ENCODE measurements at regions of chr11 and their contacts with region 1.

Region 1: GRCh38 chr11:8019314-8020243 is 32.4 kb downstream of the EIF3F start:
- DNase-seq: no peak
- H3K4me3 ChIP-seq: peak overlapping the region; percentile 45 to 46
- H3K27ac ChIP-seq: peak overlapping the region; percentile 76 to 77
- H3K4me1 ChIP-seq: no peaks in the 10 kb centered on the region
- H3K27me3 ChIP-seq: no peaks in the 10 kb centered on the region
- CTCF ChIP-seq: no peak
- POLR2A ChIP-seq: no peak

Region 2: GRCh38 chr11:8056810-8057463 is 37.4 kb after region 1 on chr11:
- intact Hi-C with region 1: no loop called
- DNase-seq: no peak
- H3K4me3 ChIP-seq: no peak overlapping the region
- H3K27ac ChIP-seq: no peak overlapping the region
- H3K4me1 ChIP-seq: no peaks in the 10 kb centered on the region
- H3K27me3 ChIP-seq: no peaks in the 10 kb centered on the region
- CTCF ChIP-seq: no peak
- POLR2A ChIP-seq: no peak

Region 3: GRCh38 chr11:8087185-8087584 is 67.6 kb after region 1 on chr11:
- intact Hi-C with region 1: loop called (anchors 5 kb)
- DNase-seq: no peak
- H3K4me3 ChIP-seq: no peak overlapping the region
- H3K27ac ChIP-seq: no peak overlapping the region
- H3K4me1 ChIP-seq: no peaks in the 10 kb centered on the region
- H3K27me3 ChIP-seq: no peaks in the 10 kb centered on the region
- CTCF ChIP-seq: no peak
- POLR2A ChIP-seq: no peak

Measured in prostate gland (tissue), 2 donors.